Right cardiac atrium (tissue), 5 donors: ENCODE measurements at regions of chr3 and their contacts with region 1.

Region 1: DNA sequence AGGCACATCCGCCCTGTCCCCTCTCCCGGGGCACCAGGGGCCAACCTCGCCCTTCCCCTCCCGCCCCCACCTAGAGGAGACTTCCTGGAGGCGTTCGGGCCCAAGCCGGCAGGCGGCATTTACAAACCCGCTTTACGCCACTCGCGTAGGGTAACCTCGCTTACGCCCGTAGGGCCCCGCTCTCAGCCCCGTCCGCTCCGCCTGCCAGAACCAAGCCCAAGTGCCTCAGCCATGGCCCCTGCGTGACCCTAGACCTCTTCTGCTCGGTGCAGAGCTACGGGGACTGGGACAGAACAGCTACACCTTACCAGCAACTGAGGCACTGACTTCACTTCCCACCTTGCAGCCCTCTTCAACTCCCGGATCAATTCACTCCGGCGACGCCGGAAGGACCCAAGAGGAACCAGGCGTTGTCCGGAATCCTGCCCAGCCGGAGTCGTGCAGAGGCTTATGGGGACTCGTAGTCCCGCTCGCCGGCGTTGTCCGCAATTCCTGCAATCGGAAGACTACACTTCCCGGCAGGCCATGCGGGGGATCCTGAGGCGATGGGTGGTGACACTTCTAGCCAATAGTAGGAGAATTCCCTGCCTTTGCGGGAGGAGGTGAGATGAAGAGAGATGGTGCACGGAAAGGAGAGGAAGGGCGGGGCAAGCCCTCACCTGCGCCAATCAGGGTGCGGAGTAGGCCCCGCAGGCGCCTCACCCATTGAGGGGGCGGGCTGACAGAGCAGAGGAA is at the start of gene PDCD10:
- DNase-seq: peak; percentile 98 to 99 (median 99)
- ATAC-seq: peak; percentile 99
- H3K4me3 ChIP-seq: peak within 1 kb of the TSS; percentile 77
- H3K27ac ChIP-seq: peak within 1 kb of the TSS; percentile 96
- H3K4me1 ChIP-seq: no peaks in the 10 kb centered on the region
- H3K27me3 ChIP-seq: no peaks in the 10 kb centered on the region
- total RNA-seq, gene PDCD10: 26.6 to 32.9 (median 30.9) TPM

Region 2: DNA sequence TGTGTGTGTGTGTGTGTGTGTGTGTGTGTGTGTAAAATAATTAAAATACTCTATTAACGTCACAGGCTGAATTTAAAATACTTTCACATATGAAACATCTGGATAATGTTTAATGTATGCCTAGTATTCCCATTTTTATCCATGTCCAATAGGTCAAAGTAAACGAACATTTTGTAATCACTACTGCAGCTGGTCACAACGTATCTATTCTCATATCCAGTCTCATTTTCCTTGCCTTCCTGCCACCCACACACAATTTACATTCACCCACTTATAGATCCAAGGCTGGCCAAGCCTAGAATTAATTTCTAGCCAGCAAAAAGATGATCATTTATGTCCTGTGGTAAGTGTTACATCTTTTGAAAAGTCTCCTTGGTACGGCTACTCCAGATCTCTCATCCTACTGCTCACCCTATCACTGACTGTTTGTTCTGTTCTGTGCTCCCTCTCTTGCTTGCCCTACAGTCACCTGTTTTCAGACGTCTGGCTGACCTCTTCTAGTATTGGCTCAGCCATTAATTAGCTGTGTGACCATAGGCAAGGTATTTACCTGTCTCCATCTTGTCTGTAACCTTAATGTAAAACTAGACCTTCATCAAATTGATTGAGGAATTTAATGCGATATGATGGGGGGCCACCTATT is 278.4 kb before region 1 on chr3:
- intact Hi-C with region 1: no loop called
- DNase-seq: no peak
- ATAC-seq: no peak
- H3K4me3 ChIP-seq: no peak overlapping the region
- H3K27ac ChIP-seq: no peak overlapping the region
- H3K4me1 ChIP-seq: no peaks in the 10 kb centered on the region
- H3K27me3 ChIP-seq: no peaks in the 10 kb centered on the region

Region 3: GRCh38 chr3:167467848-167468611 is 266.6 kb before region 1 on chr3:
- intact Hi-C with region 1: no loop called
- DNase-seq: no peak
- ATAC-seq: no peak
- H3K4me3 ChIP-seq: no peak overlapping the region
- H3K27ac ChIP-seq: no peak overlapping the region
- H3K4me1 ChIP-seq: peaks cover 3% of the 10 kb centered on the region
- H3K27me3 ChIP-seq: no peaks in the 10 kb centered on the region

Region 4: DNA sequence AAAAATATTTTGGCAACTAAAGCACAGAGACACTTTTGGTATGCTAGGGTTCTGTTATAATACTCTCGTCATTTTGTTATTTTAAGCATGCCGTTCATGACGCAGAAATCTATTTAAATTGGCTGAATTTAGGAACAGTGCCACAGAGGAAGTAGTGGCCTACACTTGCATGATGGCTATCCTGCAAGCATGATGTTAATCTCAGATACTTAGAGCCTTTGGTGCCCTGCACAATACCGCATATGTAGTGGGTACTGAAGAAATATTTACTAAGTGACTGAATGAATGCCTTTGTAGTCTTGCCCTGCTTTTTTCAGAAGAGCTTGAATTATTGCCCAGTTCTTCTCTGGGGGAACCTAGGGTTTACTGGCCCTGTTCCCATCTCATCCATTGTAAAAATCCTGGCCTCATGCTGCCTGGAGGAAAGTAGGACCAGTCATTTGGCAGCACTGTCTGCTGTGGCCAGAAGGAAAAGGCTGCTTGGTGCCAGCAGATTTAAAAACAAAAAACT is 79.8 kb after region 1 on chr3:
- intact Hi-C with region 1: loop called in 1 of 4 experiments (anchors 5 kb)
- DNase-seq: no peak
- ATAC-seq: peak; percentile 87 to 89
- H3K4me3 ChIP-seq: no peak overlapping the region
- H3K27ac ChIP-seq: peak overlapping the region; percentile 0
- H3K4me1 ChIP-seq: peaks cover 2% of the 10 kb centered on the region
- H3K27me3 ChIP-seq: no peaks in the 10 kb centered on the region

Region 5: GRCh38 chr3:167876620-167877281 is 142.1 kb after region 1 on chr3:
- intact Hi-C with region 1: loop called in 1 of 4 experiments (anchors 10 kb)
- DNase-seq: no peak
- ATAC-seq: peak; percentile 55 to 72
- H3K4me3 ChIP-seq: no peak overlapping the region
- H3K27ac ChIP-seq: peak overlapping the region; percentile 64
- H3K4me1 ChIP-seq: no peaks in the 10 kb centered on the region
- H3K27me3 ChIP-seq: no peaks in the 10 kb centered on the region

Region 6: GRCh38 chr3:168341192-168341815 is 606.6 kb after region 1 on chr3:
- intact Hi-C with region 1: no loop called
- DNase-seq: no peak
- ATAC-seq: no peak
- H3K4me3 ChIP-seq: no peak overlapping the region
- H3K27ac ChIP-seq: no peak overlapping the region
- H3K4me1 ChIP-seq: no peaks in the 10 kb centered on the region
- H3K27me3 ChIP-seq: no peaks in the 10 kb centered on the region

Region 7: GRCh38 chr3:168604767-168605166 is 870.1 kb after region 1 on chr3:
- intact Hi-C with region 1: no loop called
- DNase-seq: no peak
- ATAC-seq: no peak
- H3K4me3 ChIP-seq: no peak overlapping the region
- H3K27ac ChIP-seq: no peak overlapping the region
- H3K4me1 ChIP-seq: no peaks in the 10 kb centered on the region
- H3K27me3 ChIP-seq: no peaks in the 10 kb centered on the region